ENCODE measurements at regions of chr3 and their contacts with region 1.

Region 1: GRCh38 chr3:131794766-131795388 is 239.9 kb downstream of the CPNE4 start:
- DNase-seq: peak; percentile 37
- ATAC-seq: peak; percentile 70
- H3K4me3 Mint-ChIP-seq: no peak overlapping the region
- H3K27ac Mint-ChIP-seq: no peak overlapping the region
- H3K4me1 Mint-ChIP-seq: peaks cover 9% of the 10 kb centered on the region
- H3K27me3 Mint-ChIP-seq: peaks cover 4% of the 10 kb centered on the region

Region 2: DNA sequence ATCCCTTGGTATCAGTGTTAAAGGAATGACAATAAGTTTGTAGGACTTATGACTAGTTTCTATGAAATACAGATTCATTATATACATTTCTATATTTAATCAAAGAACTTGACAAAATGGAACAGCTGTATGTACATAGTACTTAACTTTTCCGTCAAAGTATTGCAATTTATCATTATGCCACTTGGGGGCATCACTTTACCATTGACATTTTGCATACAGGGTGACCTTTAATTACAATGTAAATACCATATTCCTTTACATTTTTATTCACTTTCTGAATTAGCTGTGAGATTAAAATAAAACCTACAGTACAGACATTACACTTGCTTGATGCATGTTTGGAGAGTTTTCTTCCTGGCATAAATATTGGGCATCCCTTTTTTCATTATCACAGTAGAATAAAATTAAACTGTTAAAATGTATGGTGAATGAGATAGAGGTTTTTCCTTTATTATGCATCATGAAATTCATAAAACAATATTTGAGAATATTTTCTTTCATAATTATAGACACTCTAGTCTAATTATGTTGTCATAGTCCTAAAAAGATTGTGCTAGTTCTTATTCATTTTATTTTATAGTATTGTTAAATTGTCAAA is 761.3 kb before region 1 on chr3:
- CTCF ChIA-PET with region 1: interaction called, 4 read pairs
- POLR2A ChIA-PET with region 1: no interaction called
- intact Hi-C with region 1: loop called in 1 of 2 experiments (anchors 5 kb)
- DNase-seq: no peak
- ATAC-seq: peak; percentile 65
- H3K4me3 Mint-ChIP-seq: no peak overlapping the region
- H3K27ac Mint-ChIP-seq: no peak overlapping the region
- H3K4me1 Mint-ChIP-seq: no peaks in the 10 kb centered on the region
- H3K27me3 Mint-ChIP-seq: no peaks in the 10 kb centered on the region

Measured in activated CD4-positive, alpha-beta T cell treated with anti-CD3 and anti-CD28 coated beads for 36 hours (primary cell).